Activated CD8-positive, alpha-beta T cell treated with anti-CD3 and anti-CD28 coated beads for 36 hours (primary cell): ENCODE measurements at regions of chr11 and their contacts with region 1.

Region 1: DNA sequence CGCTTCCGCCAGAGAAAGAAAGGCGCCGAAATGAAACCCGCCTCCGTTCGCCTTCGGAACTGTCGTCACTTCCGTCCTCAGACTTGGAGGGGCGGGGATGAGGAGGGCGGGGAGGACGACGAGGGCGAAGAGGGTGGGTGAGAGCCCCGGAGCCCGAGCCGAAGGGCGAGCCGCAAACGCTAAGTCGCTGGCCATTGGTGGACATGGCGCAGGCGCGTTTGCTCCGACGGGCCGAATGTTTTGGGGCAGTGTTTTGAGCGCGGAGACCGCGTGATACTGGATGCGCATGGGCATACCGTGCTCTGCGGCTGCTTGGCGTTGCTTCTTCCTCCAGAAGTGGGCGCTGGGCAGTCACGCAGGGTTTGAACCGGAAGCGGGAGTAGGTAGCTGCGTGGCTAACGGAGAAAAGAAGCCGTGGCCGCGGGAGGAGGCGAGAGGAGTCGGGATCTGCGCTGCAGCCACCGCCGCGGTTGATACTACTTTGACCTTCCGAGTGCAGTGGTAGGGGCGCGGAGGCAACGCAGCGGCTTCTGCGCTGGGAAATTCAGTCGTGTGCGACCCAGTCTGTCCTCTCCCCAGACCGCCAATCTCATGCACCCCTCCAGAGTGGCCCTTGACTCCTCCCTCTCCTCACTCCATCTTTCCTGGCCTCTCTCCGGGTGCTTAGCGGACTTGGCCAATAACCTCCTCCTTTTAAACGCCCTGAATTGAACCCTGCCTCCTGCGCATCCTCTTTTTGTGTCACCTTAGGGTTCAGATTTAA is at the start of gene ATM:
- DNase-seq: peak; percentile 99
- ATAC-seq: peak; percentile 80
- H3K4me3 Mint-ChIP-seq: no peak within 1 kb of the TSS
- H3K27ac Mint-ChIP-seq: no peak within 1 kb of the TSS
- H3K4me1 Mint-ChIP-seq: peaks cover 39% of the 10 kb centered on the region
- H3K27me3 Mint-ChIP-seq: no peaks in the 10 kb centered on the region
- CTCF ChIP-seq: peak; percentile 54
- total RNA-seq, gene ATM: 75.8 to 77.5 TPM

Region 2: GRCh38 chr11:108199446-108200321 is 23.2 kb before region 1 on chr11:
- CTCF ChIA-PET with region 1: no interaction called
- POLR2A ChIA-PET with region 1: interaction called, 14 read pairs
- intact Hi-C with region 1: no loop called
- DNase-seq: peak; percentile 92
- ATAC-seq: peak; percentile 95
- H3K4me3 Mint-ChIP-seq: no peak overlapping the region
- H3K27ac Mint-ChIP-seq: peak overlapping the region; percentile 67
- H3K4me1 Mint-ChIP-seq: peaks cover 89% of the 10 kb centered on the region
- H3K27me3 Mint-ChIP-seq: no peaks in the 10 kb centered on the region
- CTCF ChIP-seq: no peak

Region 3: DNA sequence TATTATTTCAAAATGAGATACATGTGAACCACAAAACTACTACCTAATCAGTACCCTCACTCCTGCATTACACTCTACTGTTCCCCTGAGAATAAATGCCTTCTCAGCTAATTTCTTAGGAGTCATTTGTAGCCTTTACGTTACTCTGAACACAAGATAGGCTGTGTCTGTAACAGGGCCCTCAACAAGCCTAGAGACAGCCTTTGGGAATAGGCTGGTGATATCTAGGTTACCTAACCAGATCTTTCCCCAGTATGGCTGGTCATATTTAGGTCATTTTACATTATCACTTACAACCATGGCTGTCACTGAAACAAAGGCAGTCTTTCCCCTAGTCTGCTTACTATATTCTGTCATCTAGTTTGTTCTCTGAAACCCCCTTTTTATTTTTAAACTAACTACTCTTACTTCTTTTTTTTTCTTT is 14.2 kb after region 1 on chr11:
- CTCF ChIA-PET with region 1: interaction called, 79 read pairs
- POLR2A ChIA-PET with region 1: interaction called, 121 read pairs
- intact Hi-C with region 1: loop called (anchors 1 kb)
- DNase-seq: no peak
- ATAC-seq: peak; percentile 37
- H3K4me3 Mint-ChIP-seq: peak overlapping the region; percentile 58
- H3K27ac Mint-ChIP-seq: peak overlapping the region; percentile 95
- H3K4me1 Mint-ChIP-seq: peaks cover 76% of the 10 kb centered on the region
- H3K27me3 Mint-ChIP-seq: no peaks in the 10 kb centered on the region
- CTCF ChIP-seq: no peak

Region 4: DNA sequence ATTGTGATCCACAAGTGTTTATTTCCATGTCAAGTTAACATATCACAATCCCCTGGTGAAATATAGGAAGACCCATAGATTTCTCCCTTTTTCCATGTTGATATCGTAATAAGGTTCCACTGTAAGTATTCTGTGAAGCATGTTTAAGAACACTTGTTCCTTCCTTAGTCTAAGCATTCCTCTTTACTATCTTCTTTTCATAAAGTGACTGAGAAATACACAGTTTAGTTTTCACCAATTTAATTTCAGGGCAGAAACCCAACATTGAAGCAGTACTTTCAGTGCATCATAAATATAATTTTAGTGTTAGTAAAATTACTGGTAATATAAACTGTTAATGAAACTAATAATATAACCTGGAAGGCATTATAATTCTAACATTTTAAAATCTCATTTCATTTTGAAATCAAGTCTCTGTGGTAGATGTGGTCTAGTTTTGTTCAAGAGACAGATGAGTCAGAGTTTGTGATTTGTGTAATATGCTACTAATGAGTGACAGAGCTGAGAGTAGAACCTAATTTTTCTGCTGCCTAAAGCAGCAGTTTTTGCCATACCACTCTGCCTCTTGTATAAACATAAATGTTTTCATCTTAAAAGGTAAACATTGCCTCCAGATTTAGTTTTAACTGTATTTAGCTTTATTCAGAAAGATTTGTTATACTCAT is 79.4 kb after region 1 on chr11:
- CTCF ChIA-PET with region 1: interaction called, 5 read pairs
- POLR2A ChIA-PET with region 1: interaction called, 4 read pairs
- intact Hi-C with region 1: loop called (anchors 1 kb)
- DNase-seq: no peak
- ATAC-seq: peak; percentile 96
- H3K4me3 Mint-ChIP-seq: no peak overlapping the region
- H3K27ac Mint-ChIP-seq: peak overlapping the region; percentile 57
- H3K4me1 Mint-ChIP-seq: peaks cover 36% of the 10 kb centered on the region
- H3K27me3 Mint-ChIP-seq: no peaks in the 10 kb centered on the region
- CTCF ChIP-seq: no peak

Region 5: GRCh38 chr11:108467091-108467823 is 244.4 kb after region 1 on chr11 and contains the start of gene C11orf65:
- CTCF ChIA-PET with region 1: no interaction called
- POLR2A ChIA-PET with region 1: interaction called, 3 read pairs
- intact Hi-C with region 1: loop called (anchors 2 kb)
- DNase-seq: peak; percentile 98
- ATAC-seq: peak; percentile 99
- H3K4me3 Mint-ChIP-seq: peak within 1 kb of the TSS; percentile 92
- H3K27ac Mint-ChIP-seq: peak within 1 kb of the TSS; percentile 98
- H3K4me1 Mint-ChIP-seq: no peaks in the 10 kb centered on the region
- H3K27me3 Mint-ChIP-seq: no peaks in the 10 kb centered on the region
- CTCF ChIP-seq: no peak
- total RNA-seq, gene C11orf65: 1.1 to 2.3 TPM

Region 6: DNA sequence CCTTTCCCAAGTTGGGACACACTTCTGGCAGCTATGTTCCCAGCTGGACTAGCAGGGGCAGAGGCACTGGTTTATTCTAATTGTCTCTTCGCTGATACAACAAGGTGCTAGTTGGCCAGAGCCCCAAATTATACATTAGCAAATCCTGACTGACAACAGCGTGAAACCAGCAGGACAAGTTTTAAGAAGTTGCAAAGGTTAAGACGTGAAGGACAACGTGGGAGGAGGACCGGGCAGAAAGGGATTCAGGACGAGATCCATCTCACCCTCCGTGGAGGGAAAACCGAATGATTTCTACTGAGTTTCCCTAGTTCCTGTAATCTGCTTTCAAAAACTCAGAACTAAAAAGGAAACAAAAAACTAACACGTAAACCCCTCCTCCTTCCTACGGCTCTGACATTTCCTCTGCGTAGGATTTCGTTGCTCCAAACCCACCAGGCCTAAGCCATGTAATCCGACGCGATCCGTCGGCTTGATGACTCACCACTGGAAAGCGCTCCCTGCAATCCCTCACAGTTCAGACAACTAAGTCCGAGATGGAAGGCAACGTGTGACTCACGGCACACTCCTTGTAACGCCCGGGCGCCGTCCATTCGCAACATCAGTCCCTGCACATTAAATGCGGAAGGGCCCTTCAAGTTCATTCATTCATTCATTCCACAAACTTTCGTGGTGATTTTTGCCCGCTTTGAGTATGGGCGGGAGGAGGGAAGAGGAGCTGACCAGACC is 274.6 kb after region 1 on chr11:
- CTCF ChIA-PET with region 1: no interaction called
- POLR2A ChIA-PET with region 1: no interaction called
- intact Hi-C with region 1: loop called (anchors 10 kb)
- DNase-seq: peak; percentile 85
- ATAC-seq: peak; percentile 90
- H3K4me3 Mint-ChIP-seq: peak overlapping the region; percentile 87
- H3K27ac Mint-ChIP-seq: peak overlapping the region; percentile 99
- H3K4me1 Mint-ChIP-seq: peaks cover 25% of the 10 kb centered on the region
- H3K27me3 Mint-ChIP-seq: no peaks in the 10 kb centered on the region
- CTCF ChIP-seq: no peak

Region 7: GRCh38 chr11:108620958-108621772 is 398.3 kb after region 1 on chr11:
- CTCF ChIA-PET with region 1: no interaction called
- POLR2A ChIA-PET with region 1: no interaction called
- intact Hi-C with region 1: loop called (anchors 10 kb)
- DNase-seq: no peak
- ATAC-seq: peak; percentile 76
- H3K4me3 Mint-ChIP-seq: no peak overlapping the region
- H3K27ac Mint-ChIP-seq: no peak overlapping the region
- H3K4me1 Mint-ChIP-seq: peaks cover 23% of the 10 kb centered on the region
- H3K27me3 Mint-ChIP-seq: peaks cover 14% of the 10 kb centered on the region
- CTCF ChIP-seq: no peak